PC-9 (cell line): ENCODE measurements at regions of chr4 and their contacts with region 1.

Region 1: DNA sequence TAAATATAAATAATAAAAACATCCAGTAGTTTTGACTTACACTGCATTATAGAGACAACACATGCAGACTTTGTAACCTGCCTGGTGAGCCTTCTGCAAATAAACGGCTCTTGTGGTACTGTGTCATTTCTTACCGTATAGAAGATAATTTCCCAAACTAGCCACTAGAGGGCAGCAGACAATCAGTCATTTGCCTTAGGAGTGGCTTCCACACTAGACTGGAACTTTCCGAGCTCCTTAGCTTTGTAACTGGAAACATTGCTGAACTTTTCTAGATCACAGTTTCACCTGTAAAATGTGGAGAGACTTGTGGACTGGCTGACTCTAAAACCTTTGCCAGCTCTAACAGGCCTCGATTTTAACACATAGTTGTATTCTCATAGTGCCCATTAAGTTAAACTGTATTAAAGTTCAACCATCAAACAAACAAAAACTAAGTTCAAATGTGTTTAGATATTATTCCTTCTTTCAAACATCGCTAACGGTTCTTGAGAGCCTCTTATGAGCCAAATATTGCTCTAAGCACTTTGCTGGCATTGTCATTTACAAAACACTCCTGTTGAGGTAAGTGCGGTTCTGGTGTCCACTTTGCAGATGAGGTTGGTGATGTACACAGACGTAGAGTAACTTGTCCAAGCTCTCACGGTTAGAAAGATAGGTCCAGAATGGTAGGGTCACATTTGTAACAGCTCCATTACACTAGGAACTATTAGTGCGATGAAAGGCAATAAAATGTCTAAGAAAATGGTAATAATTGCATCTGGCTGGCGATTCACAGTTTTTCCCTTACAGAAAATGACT is 345.5 kb downstream of the ANK2 start:
- DNase-seq: peak; percentile 39 to 60
- H3K4me3 ChIP-seq: no peak overlapping the region
- H3K27ac ChIP-seq: no peak overlapping the region
- H3K4me1 ChIP-seq: no peaks in the 10 kb centered on the region; the same call in 1 of the 2 replicates
- H3K27me3 ChIP-seq: no peaks in the 10 kb centered on the region
- CTCF ChIP-seq: peak; percentile 83

Region 2: DNA sequence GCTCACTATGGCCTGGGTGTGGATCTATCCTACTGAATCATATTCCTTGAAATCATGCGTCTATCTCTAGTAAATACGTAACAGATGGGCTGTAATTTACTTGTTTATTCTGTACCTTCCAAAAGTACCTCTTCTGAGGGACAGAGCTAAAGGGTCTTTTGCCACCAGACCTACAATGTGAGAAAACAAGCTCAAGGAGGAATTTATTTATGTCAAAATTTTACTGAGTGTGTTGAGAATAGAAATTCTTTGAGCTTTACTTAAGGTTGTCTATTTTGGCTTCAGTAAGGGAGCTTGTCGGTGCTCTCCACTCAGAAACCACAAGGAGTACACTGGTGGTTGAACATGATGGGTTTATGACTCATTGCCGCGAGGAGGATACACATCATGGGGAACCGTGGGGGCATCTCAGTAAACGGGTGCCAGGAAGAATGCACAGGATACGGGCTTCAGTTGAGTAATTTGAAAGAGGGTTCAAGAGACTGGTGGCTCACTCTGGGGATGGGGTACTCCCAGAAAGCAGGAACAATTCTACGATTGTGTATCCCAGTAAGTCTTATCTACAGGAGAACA is 342.5 kb before region 1 on chr4:
- CTCF ChIA-PET with region 1: no interaction called
- POLR2A ChIA-PET with region 1: no interaction called
- intact Hi-C with region 1: no loop called
- DNase-seq: no peak
- H3K4me3 ChIP-seq: no peak overlapping the region
- H3K27ac ChIP-seq: no peak overlapping the region
- H3K4me1 ChIP-seq: 0 out of 2 replicates have a peak, but pooled peaks cover under 1% of the 10 kb centered on the region
- H3K27me3 ChIP-seq: no peaks in the 10 kb centered on the region
- CTCF ChIP-seq: no peak

Region 3: DNA sequence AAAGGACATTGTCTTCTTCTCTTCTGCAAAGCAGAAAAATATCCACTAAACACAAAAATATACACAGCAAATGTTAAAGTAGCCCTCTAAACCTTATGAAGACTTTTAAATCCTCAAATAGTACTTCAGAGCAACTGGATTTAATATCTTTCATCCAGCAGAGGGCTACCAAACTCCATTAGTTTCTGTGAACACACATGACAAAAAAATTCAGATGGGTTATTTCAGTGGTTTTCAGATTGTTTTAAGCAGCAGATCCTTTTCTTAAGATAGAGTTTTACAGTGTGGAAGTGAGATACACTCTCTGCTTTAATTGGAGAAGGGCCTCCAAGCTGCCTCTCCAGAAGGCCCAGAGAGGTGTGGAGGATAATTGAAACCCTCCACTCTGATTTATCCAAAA is 288.8 kb before region 1 on chr4:
- CTCF ChIA-PET with region 1: no interaction called
- POLR2A ChIA-PET with region 1: no interaction called
- intact Hi-C with region 1: loop called (anchors 5 kb)
- DNase-seq: no peak
- H3K4me3 ChIP-seq: no peak overlapping the region
- H3K27ac ChIP-seq: no peak overlapping the region
- H3K4me1 ChIP-seq: no peaks in the 10 kb centered on the region
- H3K27me3 ChIP-seq: no peaks in the 10 kb centered on the region
- CTCF ChIP-seq: peak; percentile 43; the same call in 1 of the 2 replicates

Region 4: GRCh38 chr4:113328514-113328913 is 66.4 kb before region 1 on chr4:
- CTCF ChIA-PET with region 1: no interaction called
- POLR2A ChIA-PET with region 1: no interaction called
- intact Hi-C with region 1: no loop called
- DNase-seq: no peak
- H3K4me3 ChIP-seq: no peak overlapping the region
- H3K27ac ChIP-seq: no peak overlapping the region
- H3K4me1 ChIP-seq: no peaks in the 10 kb centered on the region
- H3K27me3 ChIP-seq: no peaks in the 10 kb centered on the region
- CTCF ChIP-seq: peak; percentile 43; the same call in 1 of the 2 replicates

Region 5: DNA sequence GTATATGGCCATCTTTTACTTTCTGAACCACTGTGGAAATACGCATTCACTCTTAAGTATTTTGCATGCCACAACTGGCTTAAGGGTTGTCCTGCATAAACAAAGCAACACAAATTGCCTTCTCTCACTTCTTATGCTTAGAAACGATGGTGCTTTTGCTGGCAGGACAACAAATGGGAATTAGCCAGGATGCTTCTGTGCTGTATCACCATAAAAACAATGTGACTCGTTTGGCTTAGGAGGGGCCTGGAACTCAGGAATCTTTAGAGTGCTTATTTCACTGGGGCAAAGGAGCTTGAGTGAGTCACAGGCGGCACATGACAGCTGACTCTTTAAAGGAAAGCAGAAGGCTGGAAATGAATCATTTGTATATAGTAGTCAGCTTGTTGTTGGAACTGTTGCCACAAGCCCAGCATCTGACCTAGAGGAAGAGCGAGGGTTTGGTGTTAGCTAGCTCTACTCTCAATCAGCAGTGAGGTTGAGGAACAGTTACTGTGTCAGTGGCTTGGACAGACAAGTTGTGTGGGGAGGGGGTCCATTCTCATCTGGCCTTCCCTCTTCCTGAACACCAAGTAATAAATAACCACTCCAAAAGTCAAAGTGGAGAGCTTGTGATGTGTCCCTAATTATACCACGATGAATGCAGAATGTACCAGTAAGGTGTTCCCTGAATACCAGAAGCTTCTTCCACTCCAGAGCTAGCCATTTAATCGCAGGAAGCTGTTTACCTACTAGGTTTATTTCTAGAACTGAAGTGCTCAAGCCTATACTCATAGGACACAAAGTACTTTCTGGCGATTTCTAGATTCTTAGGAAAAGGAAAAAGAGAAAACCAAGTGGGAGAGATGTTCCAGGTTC is 73.5 kb after region 1 on chr4:
- CTCF ChIA-PET with region 1: no interaction called
- POLR2A ChIA-PET with region 1: no interaction called
- intact Hi-C with region 1: no loop called
- DNase-seq: peak; percentile 60 to 92
- H3K4me3 ChIP-seq: peak overlapping the region; percentile 27; the same call in 1 of the 2 replicates
- H3K27ac ChIP-seq: peak overlapping the region; percentile 80
- H3K4me1 ChIP-seq: peaks cover 25% of the 10 kb centered on the region
- H3K27me3 ChIP-seq: no peaks in the 10 kb centered on the region
- CTCF ChIP-seq: no peak

Region 6: GRCh38 chr4:113547487-113548042 is 152.6 kb after region 1 on chr4:
- CTCF ChIA-PET with region 1: no interaction called
- POLR2A ChIA-PET with region 1: no interaction called
- intact Hi-C with region 1: loop called (anchors 2 kb)
- DNase-seq: peak; percentile 76 to 83
- H3K4me3 ChIP-seq: no peak overlapping the region
- H3K27ac ChIP-seq: no peak overlapping the region
- H3K4me1 ChIP-seq: peaks cover 10% of the 10 kb centered on the region
- H3K27me3 ChIP-seq: no peaks in the 10 kb centered on the region
- CTCF ChIP-seq: peak; percentile 83

Region 7: DNA sequence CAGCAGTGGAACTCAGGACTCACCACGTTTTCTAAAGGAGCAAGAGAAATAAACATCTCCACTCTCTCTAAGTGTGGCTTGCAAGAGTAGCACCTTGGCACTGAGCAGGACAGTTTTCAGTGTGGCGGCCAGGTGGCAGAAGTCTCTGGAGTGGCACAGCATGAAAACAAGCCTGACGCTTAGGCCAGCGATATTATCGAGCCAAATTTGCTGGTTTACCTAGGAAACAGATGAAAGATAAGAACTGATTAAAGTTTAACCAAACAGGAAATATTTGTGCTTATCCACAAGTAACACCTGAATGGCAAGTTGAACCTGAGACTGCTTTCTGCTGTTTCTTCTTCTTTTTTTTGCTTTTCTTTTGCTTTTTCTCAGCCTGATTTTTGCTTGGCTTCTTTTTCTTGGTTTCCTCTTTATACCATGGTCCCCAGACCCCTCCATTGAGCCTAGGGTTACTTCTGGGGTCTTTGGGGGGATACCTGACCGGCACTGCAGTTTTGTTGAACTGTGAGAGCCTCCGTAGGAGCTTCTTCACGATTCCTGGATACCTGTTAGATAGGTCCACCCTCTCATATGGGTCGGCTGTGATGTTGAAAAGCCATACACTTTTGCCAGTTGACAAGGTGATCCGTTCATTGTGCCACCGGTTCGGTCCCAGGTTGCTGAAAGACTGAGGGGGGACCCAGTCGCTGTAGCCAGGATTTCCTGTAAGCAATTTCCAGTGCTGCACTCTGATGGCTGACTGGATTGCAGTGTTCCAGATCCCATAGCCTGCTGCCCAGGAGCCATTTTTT is 507.3 kb after region 1 on chr4:
- CTCF ChIA-PET with region 1: no interaction called
- POLR2A ChIA-PET with region 1: no interaction called
- intact Hi-C with region 1: loop called (anchors 10 kb)
- DNase-seq: peak in 1 of 2 experiments; percentile 10
- H3K4me3 ChIP-seq: no peak overlapping the region
- H3K27ac ChIP-seq: no peak overlapping the region
- H3K4me1 ChIP-seq: no peaks in the 10 kb centered on the region
- H3K27me3 ChIP-seq: no peaks in the 10 kb centered on the region
- CTCF ChIP-seq: no peak

Region 8: DNA sequence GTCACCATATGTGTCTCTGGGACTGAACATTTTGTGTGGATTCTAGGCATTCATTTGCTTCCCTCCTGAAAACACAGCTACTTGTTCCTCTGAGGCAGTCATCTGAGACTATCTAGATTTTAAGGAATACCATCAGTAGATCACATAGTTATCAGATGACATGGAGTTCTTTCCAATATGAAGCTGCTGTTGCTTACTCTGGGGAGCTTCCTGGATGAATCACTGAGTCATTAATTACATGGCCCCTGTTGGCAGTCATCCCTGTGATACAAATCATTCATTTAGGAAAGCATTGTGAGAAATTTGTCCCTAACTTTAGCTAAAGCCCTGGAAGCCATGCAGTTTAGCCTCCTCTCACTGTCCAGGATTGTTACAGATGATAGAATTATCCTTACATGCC is 682.7 kb after region 1 on chr4:
- CTCF ChIA-PET with region 1: no interaction called
- POLR2A ChIA-PET with region 1: no interaction called
- intact Hi-C with region 1: loop called (anchors 5 kb)
- DNase-seq: peak in 1 of 2 experiments; percentile 9
- H3K4me3 ChIP-seq: no peak overlapping the region
- H3K27ac ChIP-seq: no peak overlapping the region
- H3K4me1 ChIP-seq: no peaks in the 10 kb centered on the region
- H3K27me3 ChIP-seq: no peaks in the 10 kb centered on the region
- CTCF ChIP-seq: no peak